ENCODE measurements at regions of chr3 and their contacts with region 1.

Region 1: DNA sequence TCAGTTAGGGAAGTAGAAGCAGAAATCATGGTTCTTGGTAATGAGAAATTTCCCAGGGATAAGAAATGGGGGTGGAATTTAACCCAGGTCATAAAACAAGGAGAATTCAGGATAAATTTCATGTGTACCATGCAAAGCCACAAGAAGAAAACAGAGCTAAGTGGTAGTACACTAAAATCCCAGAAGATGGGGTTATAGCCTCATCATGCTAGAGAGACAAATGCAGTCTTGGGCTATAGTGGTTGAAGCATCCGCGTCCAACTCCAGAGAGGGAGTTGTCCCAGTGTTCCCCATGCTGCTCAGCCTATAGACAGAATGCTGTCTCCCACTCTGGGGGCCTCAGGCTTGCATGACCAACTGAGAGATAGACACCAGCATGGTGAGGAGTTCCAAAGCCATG is 36.2 kb upstream of the CLRN1 start:
- DNase-seq: peak in 1 of 2 experiments; percentile 47
- H3K4me3 ChIP-seq: no peak overlapping the region
- H3K4me3 Mint-ChIP-seq: no peak overlapping the region
- H3K27ac Mint-ChIP-seq: no peak overlapping the region
- H3K4me1 ChIP-seq: no peaks in the 10 kb centered on the region
- H3K4me1 Mint-ChIP-seq: no peaks in the 10 kb centered on the region
- H3K27me3 ChIP-seq: no peaks in the 10 kb centered on the region
- H3K27me3 Mint-ChIP-seq: no peaks in the 10 kb centered on the region
- CTCF ChIP-seq: peak; percentile 17 to 34

Region 2: GRCh38 chr3:151067158-151067557 is 58.5 kb after region 1 on chr3:
- CTCF ChIA-PET with region 1: interaction called, 10 read pairs
- POLR2A ChIA-PET with region 1: no interaction called
- intact Hi-C with region 1: no loop called
- DNase-seq: peak; percentile 42 to 63
- H3K4me3 ChIP-seq: no peak overlapping the region
- H3K4me3 Mint-ChIP-seq: no peak overlapping the region
- H3K27ac Mint-ChIP-seq: no peak overlapping the region
- H3K4me1 ChIP-seq: no peaks in the 10 kb centered on the region
- H3K4me1 Mint-ChIP-seq: no peaks in the 10 kb centered on the region
- H3K27me3 ChIP-seq: no peaks in the 10 kb centered on the region
- H3K27me3 Mint-ChIP-seq: peaks cover 3% of the 10 kb centered on the region
- CTCF ChIP-seq: peak; percentile 55 to 57

Region 3: GRCh38 chr3:151282921-151283320 is 274.2 kb after region 1 on chr3:
- CTCF ChIA-PET with region 1: no interaction called
- POLR2A ChIA-PET with region 1: no interaction called
- intact Hi-C with region 1: loop called (anchors 10 kb)
- DNase-seq: peak in 1 of 2 experiments; percentile 44
- H3K4me3 ChIP-seq: no peak overlapping the region
- H3K4me3 Mint-ChIP-seq: no peak overlapping the region
- H3K27ac Mint-ChIP-seq: no peak overlapping the region
- H3K4me1 ChIP-seq: peaks cover 9% of the 10 kb centered on the region
- H3K4me1 Mint-ChIP-seq: peaks cover 7% of the 10 kb centered on the region
- H3K27me3 ChIP-seq: no peaks in the 10 kb centered on the region
- H3K27me3 Mint-ChIP-seq: no peaks in the 10 kb centered on the region
- CTCF ChIP-seq: peak; percentile 56 to 60